CD14-positive monocyte (primary cell): ENCODE measurements at regions of chr19 and their contacts with region 1.

Region 1: DNA sequence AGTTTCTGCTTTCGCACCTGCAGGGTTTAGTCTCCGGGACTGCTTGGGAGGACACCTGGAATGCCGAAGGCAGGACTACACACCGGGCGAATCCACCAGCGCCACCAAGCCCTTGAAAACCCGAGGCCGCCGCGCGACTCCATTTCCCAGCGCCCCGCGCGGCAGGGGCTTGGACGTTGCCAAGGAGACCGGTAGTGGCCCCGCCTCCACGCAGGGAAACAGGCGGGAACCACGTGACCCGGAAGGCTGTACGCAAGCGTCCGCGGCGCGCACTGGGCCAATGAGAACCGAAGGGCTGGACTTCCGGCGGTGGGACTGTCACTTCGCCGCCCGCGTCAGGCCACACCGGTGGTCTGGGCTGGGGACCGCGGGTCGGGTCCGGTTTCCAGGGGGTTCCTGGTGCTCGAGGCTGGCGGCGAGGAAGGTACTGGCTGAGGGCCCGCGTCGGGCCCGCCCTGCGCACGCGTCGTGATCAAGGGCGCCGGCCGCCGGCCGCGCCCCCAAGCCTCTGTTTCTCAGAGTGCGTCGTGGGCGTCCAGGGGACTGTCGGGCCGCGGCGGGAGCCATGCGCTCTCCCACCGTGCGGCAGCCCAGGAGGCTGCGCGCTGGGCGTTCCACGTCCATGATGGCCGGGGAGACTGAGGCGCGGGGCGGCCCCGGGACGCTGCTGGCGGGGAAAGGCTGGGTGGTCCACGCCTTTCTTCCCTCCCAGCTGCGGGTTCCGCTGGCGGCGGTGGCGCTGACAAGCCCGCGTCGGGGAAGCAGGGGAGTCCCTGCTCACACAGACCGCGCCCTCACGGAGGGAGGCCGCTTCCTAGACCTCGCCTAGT is at the start of gene ZNF324:
- DNase-seq: peak; percentile 96 to 97 (median 96)
- H3K4me3 ChIP-seq: peak within 1 kb of the TSS; percentile 62 to 92 (median 65)
- H3K4me3 Mint-ChIP-seq: peak within 1 kb of the TSS; percentile 74 to 89
- H3K27ac ChIP-seq: peak within 1 kb of the TSS in 1 of 2 donors; percentile 85
- H3K27ac Mint-ChIP-seq: peak within 1 kb of the TSS; percentile 17 to 90 (median 74)
- H3K4me1 ChIP-seq: peaks cover 24 to 29% of the 10 kb centered on the region in 2 donors
- H3K4me1 Mint-ChIP-seq: peaks cover 24% of the 10 kb centered on the region
- H3K27me3 ChIP-seq: no peaks in the 10 kb centered on the region
- H3K27me3 Mint-ChIP-seq: peaks cover 3 to 9% (median 6%) of the 10 kb centered on the region in 3 donors
- CTCF ChIP-seq: no peak
- polyA plus RNA-seq, gene ZNF324: 4.1 to 5.7 (median 5.3) TPM

Region 2: GRCh38 chr19:58439576-58440554 is 27.1 kb before region 1 on chr19 and contains the start of gene ZNF132:
- intact Hi-C with region 1: no loop called
- DNase-seq: peak; percentile 100
- H3K4me3 ChIP-seq: peak within 1 kb of the TSS; percentile 47 to 81 (median 79)
- H3K4me3 Mint-ChIP-seq: peak within 1 kb of the TSS; percentile 86 to 93
- H3K27ac ChIP-seq: peak within 1 kb of the TSS; percentile 81 to 93
- H3K27ac Mint-ChIP-seq: peak within 1 kb of the TSS; percentile 93 to 98 (median 95)
- H3K4me1 ChIP-seq: peaks cover 16% of the 10 kb centered on the region in 2 donors
- H3K4me1 Mint-ChIP-seq: peaks cover 16% of the 10 kb centered on the region
- H3K27me3 ChIP-seq: peaks cover 0 to 3% of the 10 kb centered on the region in 2 donors
- H3K27me3 Mint-ChIP-seq: peaks cover 3 to 14% (median 14%) of the 10 kb centered on the region in 3 donors
- CTCF ChIP-seq: no peak
- polyA plus RNA-seq, gene ZNF132: 0.40 to 0.92 (median 0.75) TPM

Region 3: GRCh38 chr19:58499021-58499927 is 32.3 kb after region 1 on chr19:
- intact Hi-C with region 1: loop called in 1 of 2 experiments (anchors 1 kb)
- DNase-seq: peak; percentile 98 to 99 (median 98)
- H3K4me3 ChIP-seq: peak overlapping the region; percentile 33 to 75 (median 57)
- H3K4me3 Mint-ChIP-seq: peak overlapping the region; percentile 82 to 90
- H3K27ac ChIP-seq: peak overlapping the region; percentile 82 to 83
- H3K27ac Mint-ChIP-seq: peak overlapping the region; percentile 88 to 94 (median 92)
- H3K4me1 ChIP-seq: peaks cover 13 to 16% of the 10 kb centered on the region in 2 donors
- H3K4me1 Mint-ChIP-seq: peaks cover 14% of the 10 kb centered on the region
- H3K27me3 ChIP-seq: no peaks in the 10 kb centered on the region
- H3K27me3 Mint-ChIP-seq: peaks cover 4 to 12% (median 7%) of the 10 kb centered on the region in 3 donors
- CTCF ChIP-seq: peak; percentile 18

Region 4: DNA sequence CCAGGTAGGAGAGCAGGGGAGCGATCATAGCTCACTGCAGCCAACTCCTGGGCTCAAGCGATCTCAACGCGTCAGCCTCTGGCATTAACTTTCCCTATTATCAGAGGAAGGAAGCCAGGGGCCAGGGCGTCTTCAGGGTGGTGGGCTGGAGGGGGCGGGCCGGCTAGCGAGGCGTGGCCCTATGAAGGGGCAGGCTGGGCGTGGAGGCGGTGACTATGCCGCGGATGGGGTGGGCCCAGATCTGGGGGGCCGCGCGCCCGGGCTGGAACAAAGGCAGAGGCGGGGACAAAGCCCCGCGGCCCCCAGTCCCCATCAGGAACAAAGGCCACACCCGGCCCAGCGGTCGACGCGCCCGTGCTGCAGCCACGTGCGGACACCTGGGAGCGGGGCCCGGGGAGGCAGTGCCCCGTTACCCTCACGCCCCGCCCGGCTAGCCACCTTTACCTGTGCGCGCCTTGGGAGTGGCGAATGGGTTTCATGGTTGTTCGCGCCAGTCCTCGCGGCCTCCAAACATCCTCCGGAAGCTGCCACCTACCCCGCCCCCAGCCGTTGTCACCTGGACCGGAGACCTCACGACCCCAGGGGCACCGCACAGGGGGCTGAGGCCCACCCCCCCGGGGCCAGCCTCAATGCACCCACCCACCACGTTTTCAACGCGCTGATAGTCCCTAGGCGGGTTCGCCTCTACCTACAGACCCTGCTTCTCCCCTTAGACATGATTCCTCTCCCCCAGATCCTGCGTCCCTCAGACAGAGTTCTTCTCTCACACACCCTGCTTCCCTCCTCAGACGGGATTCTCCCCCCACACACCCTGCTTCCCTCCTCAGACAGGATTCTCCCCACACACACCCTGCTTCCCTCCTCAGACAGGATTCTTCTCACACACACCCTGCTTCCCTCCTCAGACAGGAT is 71.5 kb after region 1 on chr19:
- intact Hi-C with region 1: no loop called
- DNase-seq: no peak
- H3K4me3 ChIP-seq: peak overlapping the region in 1 of 3 experiments; percentile 60
- H3K4me3 Mint-ChIP-seq: peak overlapping the region; percentile 62 to 91
- H3K27ac ChIP-seq: no peak overlapping the region
- H3K27ac Mint-ChIP-seq: no peak overlapping the region
- H3K4me1 ChIP-seq: peaks cover 20 to 26% of the 10 kb centered on the region in 2 donors
- H3K4me1 Mint-ChIP-seq: peaks cover 26% of the 10 kb centered on the region
- H3K27me3 ChIP-seq: peaks cover 8 to 25% of the 10 kb centered on the region in 2 donors
- H3K27me3 Mint-ChIP-seq: peaks cover 22 to 38% (median 27%) of the 10 kb centered on the region in 3 donors
- CTCF ChIP-seq: no peak